ENCODE measurements at regions of chr9 and their contacts with region 1.

Region 1: DNA sequence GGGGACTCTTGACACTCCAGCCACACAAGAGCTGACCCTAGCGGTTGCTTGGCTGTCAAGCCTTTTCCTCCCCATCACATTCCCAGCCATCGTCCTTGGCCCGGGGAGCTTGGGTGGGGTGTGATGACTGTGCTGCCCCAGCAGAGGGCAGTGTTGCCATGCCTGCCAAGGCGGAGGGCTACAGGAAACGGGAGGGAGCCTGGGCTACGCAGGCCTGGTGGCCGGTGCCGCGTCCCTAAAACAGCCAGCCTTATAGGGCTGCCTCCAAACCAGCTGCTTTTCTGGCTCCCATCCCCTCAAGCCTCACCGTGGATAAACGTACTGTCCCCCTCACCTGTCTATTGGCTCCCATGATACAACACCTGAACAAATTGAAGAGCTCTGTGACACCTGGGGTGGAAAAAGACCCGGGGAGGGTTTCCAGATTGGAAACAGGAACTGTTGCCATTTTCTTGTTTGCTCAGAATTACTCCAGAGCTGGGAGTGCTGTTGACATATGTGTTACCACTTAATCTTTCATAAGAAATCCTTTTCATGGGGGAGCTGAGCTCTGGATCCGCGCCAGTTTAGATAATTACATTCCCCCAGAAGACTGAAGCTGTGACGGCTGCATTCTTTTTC is 72.8 kb upstream of the ASTN2 start:
- DNase-seq: peak; percentile 46
- H3K4me3 Mint-ChIP-seq: no peak overlapping the region
- H3K27ac Mint-ChIP-seq: no peak overlapping the region
- H3K4me1 Mint-ChIP-seq: peaks cover 4% of the 10 kb centered on the region
- H3K27me3 Mint-ChIP-seq: peaks cover 7% of the 10 kb centered on the region

Region 2: DNA sequence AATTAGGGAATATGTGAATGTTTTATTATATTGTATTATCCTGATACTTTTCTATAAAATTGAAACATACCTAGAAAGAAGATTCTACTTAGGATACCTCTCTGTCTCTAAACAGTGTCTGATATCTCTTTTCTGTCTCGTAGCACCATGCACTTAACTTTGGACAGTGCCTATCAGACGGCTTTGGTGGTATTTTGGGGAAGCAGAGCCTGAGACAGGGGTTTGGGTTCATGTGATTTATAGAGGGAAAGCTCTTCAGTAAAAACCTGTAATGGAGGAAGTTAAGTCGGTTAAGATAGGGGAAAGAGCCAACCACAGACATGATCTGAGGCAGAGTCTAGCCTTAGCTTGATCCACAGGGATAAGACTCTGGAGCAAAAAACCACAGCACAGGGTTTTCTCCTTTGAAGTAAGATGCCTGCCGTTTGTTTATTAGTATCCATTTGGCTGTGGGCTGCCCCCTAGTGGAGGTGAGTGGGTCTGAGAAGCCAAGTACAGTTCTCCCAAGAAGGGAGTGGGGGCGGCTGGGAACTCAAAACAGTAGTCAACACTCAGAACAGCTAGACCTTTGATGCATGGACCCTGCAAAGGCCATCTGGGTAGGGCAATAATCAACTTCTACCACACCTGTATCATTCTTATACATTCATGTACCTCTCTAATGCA is 68.4 kb after region 1 on chr9:
- intact Hi-C with region 1: loop called (anchors 1 kb)
- DNase-seq: peak; percentile 20
- H3K4me3 Mint-ChIP-seq: no peak overlapping the region
- H3K27ac Mint-ChIP-seq: no peak overlapping the region
- H3K4me1 Mint-ChIP-seq: no peaks in the 10 kb centered on the region
- H3K27me3 Mint-ChIP-seq: no peaks in the 10 kb centered on the region